GM12878 (cell line): ENCODE measurements at regions of chr6 and their contacts with region 1.

Region 1: DNA sequence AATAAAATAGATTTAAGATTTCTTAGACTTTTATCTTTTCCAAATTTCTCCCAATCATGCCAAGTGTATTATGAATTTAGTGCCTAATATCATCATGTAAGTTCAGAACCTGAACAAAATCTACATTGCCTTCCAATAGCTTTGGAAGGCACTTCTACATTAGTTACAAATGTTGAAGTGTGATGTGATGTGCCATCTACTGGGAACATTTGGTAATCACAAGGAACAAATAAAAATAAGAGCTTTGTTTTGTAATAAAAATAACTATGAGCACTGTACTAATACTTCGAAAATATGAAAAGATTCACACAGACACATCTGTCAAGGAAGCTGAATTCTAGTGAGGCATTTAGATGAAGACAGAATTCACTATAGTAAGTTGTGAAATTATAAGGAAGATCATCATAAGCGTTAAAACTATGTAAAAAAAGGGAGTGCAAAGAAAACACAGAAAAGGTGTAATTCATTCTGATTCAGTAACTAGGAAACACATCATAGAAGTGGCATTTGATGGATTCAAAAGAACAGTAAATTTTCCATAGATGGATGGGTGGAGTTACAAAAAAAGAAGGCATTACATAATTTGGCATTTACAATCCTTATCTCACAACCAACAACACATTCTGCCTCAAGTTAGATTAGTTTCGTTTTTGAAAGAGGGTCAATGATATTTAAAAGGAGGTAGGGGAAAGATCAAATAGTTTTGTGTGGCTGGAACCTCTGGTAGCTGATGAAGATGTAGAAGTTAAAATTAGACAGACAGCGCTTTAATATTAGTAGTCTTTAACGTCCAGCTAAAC is 161.0 kb downstream of the ASCC3 start:
- DNase-seq: no peak
- ATAC-seq: peak; percentile 65
- H3K4me3 ChIP-seq: no peak overlapping the region
- H3K27ac ChIP-seq: no peak overlapping the region
- H3K4me1 ChIP-seq: no peaks in the 10 kb centered on the region
- H3K27me3 ChIP-seq: no peaks in the 10 kb centered on the region
- CTCF ChIP-seq: peak; percentile 43 to 48 (median 46); a peak in 4 of 6 replicates
- EP300 ChIP-seq: no peak
- POLR2A ChIP-seq: no peak
- RAD21 ChIP-seq: peak; percentile 34; the same call in 1 of the 2 replicates

Region 2: GRCh38 chr6:100504786-100505737 is 215.0 kb before region 1 on chr6:
- CTCF ChIA-PET with region 1: no interaction called
- POLR2A ChIA-PET with region 1: no interaction called
- RAD21 ChIA-PET with region 1: no interaction called
- SMC1A ChIA-PET with region 1: no interaction called
- in situ Hi-C with region 1: no loop called
- intact Hi-C with region 1: no loop called
- DNase-seq: no peak
- ATAC-seq: peak; percentile 50
- H3K4me3 ChIP-seq: no peak overlapping the region
- H3K27ac ChIP-seq: no peak overlapping the region
- H3K4me1 ChIP-seq: no peaks in the 10 kb centered on the region
- H3K27me3 ChIP-seq: no peaks in the 10 kb centered on the region
- CTCF ChIP-seq: no peak
- EP300 ChIP-seq: no peak
- POLR2A ChIP-seq: no peak
- RAD21 ChIP-seq: no peak

Region 3: DNA sequence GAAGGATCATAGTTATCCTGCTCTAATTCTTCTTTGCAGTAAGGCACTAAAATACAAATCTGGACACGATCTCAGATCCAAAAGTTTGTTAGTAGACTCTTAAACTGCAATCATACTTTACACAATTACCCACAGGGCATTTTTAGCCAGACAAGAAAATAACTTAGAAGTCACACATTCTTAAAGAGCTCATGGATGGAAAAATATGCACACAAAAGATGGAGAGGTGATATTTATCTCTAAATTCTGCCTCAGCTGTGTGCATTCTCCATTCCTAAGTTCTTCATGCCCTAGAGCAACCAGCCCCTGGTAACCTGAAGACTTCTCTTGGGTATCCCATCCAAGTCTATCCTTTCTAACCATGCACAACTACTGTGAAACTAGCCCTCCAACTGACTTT is 10.0 kb before region 1 on chr6:
- CTCF ChIA-PET with region 1: interaction called, 8 read pairs
- POLR2A ChIA-PET with region 1: no interaction called
- RAD21 ChIA-PET with region 1: interaction called, 3 read pairs
- SMC1A ChIA-PET with region 1: interaction called, 13 read pairs
- in situ Hi-C with region 1: no loop called
- intact Hi-C with region 1: no loop called
- DNase-seq: no peak
- ATAC-seq: no peak
- H3K4me3 ChIP-seq: no peak overlapping the region
- H3K27ac ChIP-seq: no peak overlapping the region
- H3K4me1 ChIP-seq: no peaks in the 10 kb centered on the region
- H3K27me3 ChIP-seq: no peaks in the 10 kb centered on the region
- CTCF ChIP-seq: no peak
- EP300 ChIP-seq: no peak
- POLR2A ChIP-seq: no peak
- RAD21 ChIP-seq: no peak

Region 4: DNA sequence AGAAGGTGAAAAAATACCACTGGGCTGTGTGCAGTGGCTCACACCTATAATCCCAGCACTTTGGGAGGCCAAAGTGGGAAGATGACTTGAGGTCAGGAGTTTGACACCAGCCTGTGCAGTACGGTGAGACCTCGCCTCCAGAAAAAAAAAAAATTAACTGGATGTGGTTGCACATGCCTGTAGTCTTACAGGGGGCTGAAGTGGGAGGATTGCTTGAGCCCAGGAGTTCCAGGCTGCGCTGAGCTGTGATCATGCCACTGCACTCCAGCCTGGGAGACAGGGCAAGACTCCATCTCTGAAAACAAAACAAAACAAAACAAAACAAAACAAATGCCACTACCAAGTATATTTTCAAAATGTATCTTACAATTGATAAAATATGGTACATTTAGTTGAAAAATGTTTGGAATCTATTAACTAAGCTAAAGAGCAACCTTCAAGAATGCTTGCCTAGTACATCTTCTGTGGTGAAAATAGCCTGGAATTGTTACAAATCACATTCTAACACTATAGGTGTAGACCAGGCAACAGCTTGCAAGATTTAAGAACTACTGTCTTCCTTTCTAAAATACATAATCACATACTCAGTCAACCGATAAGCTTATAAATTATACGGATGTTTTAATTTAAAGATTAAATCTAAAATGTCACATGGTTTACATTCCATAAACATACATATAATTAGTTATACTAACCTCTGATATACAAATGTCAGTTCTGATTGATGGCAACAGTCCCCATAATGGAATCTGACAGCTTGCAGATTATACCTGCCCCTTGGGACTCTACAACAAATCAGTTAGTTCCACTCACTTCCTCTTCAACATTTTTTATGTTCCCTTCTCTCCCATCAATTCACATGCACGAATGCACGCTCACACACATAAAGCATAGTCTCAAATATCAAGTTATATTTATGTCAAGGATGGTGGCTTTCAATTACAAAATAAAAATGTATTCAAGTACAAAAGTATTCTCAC is 10.2 kb after region 1 on chr6:
- CTCF ChIA-PET with region 1: interaction called, 12 read pairs
- POLR2A ChIA-PET with region 1: no interaction called
- RAD21 ChIA-PET with region 1: interaction called, 3 read pairs
- SMC1A ChIA-PET with region 1: interaction called, 6 read pairs
- in situ Hi-C with region 1: no loop called
- intact Hi-C with region 1: no loop called
- DNase-seq: no peak
- ATAC-seq: no peak
- H3K4me3 ChIP-seq: no peak overlapping the region
- H3K27ac ChIP-seq: no peak overlapping the region
- H3K4me1 ChIP-seq: no peaks in the 10 kb centered on the region
- H3K27me3 ChIP-seq: no peaks in the 10 kb centered on the region
- CTCF ChIP-seq: no peak
- EP300 ChIP-seq: no peak
- POLR2A ChIP-seq: no peak
- RAD21 ChIP-seq: no peak

Region 5: GRCh38 chr6:101741474-101742171 is 1021.5 kb after region 1 on chr6:
- CTCF ChIA-PET with region 1: no interaction called
- POLR2A ChIA-PET with region 1: no interaction called
- RAD21 ChIA-PET with region 1: no interaction called
- SMC1A ChIA-PET with region 1: no interaction called
- in situ Hi-C with region 1: no loop called
- intact Hi-C with region 1: no loop called
- DNase-seq: no peak
- ATAC-seq: no peak
- H3K4me3 ChIP-seq: no peak overlapping the region
- H3K27ac ChIP-seq: no peak overlapping the region
- H3K4me1 ChIP-seq: no peaks in the 10 kb centered on the region
- H3K27me3 ChIP-seq: no peaks in the 10 kb centered on the region
- CTCF ChIP-seq: no peak
- EP300 ChIP-seq: no peak
- POLR2A ChIP-seq: no peak
- RAD21 ChIP-seq: no peak